Left cardiac atrium (tissue), 4 donors: ENCODE measurements at regions of chr2 and their contacts with region 1.

Region 1: GRCh38 chr2:62505750-62506420 is at the start of gene TMEM17:
- DNase-seq: peak; percentile 95
- ATAC-seq: peak; percentile 96 to 99
- total RNA-seq, gene TMEM17: 1.3 TPM

Region 2: DNA sequence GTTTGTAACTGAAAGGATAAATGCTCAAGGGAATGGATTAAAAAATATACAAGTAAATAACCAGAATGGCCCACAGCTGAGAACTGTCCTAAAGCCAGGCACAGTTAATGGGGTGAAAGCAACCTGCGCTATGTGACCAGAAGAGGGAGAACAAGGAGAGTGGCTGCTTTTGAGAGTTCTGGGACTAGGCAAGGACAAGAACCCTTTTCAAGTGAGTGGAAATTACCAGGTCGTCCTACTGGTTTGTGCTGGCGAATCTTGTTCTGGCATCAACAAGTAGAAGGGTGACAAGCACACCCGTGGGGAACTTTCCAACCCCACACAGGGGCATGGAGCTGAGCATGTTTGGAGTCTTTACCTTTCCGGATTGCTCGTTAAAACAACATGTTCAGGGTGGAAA is 82.7 kb before region 1 on chr2:
- intact Hi-C with region 1: no loop called
- DNase-seq: no peak
- ATAC-seq: no peak

Region 3: DNA sequence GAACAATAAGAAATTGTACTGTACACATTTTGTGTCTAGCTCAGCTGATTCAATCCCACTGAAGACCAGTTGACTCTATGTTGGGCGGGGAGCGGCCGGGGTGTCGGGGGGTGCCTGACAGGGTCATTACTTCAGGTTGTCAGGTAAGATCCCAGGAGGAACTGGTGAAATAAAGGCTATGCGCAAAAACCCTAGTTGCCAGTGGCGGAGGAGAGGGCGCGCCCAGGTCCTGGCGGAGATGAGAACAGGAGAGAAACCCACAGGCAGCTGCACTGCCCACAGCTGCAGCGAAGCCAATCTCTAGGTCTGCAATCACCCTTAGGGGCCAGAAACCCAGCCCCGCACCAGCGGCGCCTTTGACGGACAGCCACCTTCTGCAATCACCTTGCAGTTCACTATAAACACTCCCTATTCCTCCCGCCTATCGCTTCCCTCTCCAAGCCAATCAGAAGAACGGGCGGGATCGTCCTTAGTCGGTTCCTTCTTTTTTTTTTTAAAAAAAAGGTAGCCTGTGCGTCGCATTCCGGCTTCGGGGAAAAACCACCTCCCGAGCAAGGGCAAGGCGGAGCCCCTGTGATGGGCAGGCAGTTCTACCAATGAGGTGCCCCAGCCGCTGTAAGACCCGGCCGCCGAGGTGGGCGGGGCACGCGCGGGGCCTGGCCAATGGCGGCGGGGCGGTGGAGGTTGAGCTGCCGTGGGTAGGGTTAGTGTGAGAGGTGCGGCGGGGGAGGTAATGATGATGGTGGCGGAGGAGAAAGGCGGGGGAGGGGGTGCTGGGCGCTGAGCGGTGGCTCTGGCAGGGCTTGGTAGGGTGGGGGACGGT is 199.3 kb after region 1 on chr2 and contains the start of gene EHBP1:
- intact Hi-C with region 1: loop called in 1 of 2 experiments (anchors 10 kb)
- DNase-seq: peak; percentile 98
- ATAC-seq: peak; percentile 98 to 99
- total RNA-seq, gene EHBP1: 34.0 to 41.9 TPM